Aorta (tissue), 5 donors: ENCODE measurements at regions of chr2 and their contacts with region 1.

Region 1: GRCh38 chr2:199955339-199956261 is at the starts of genes MAIP1 and TYW5:
- DNase-seq: peak; percentile 86 to 93
- ATAC-seq: peak; percentile 96
- H3K4me3 ChIP-seq: peak within 1 kb of the TSS; percentile 62 to 66
- H3K27ac ChIP-seq: peak within 1 kb of the TSS in 1 of 2 donors; percentile 68
- H3K4me1 ChIP-seq: peaks cover 0 to 5% of the 10 kb centered on the region in 2 donors
- H3K27me3 ChIP-seq: no peaks in the 10 kb centered on the region
- total RNA-seq, gene MAIP1: 9.9 to 12.3 TPM
- total RNA-seq, gene TYW5: 5.2 to 9.0 TPM

Region 2: GRCh38 chr2:199911052-199911876 is 44.3 kb before region 1 on chr2 and contains the start of gene C2orf69:
- intact Hi-C with region 1: loop called in 1 of 2 experiments (anchors 5 kb)
- DNase-seq: peak; percentile 98
- ATAC-seq: peak; percentile 99
- H3K4me3 ChIP-seq: peak within 1 kb of the TSS; percentile 70 to 87
- H3K27ac ChIP-seq: peak within 1 kb of the TSS; percentile 62 to 87
- H3K4me1 ChIP-seq: peaks cover 0 to 3% of the 10 kb centered on the region in 2 donors
- H3K27me3 ChIP-seq: no peaks in the 10 kb centered on the region
- total RNA-seq, gene C2orf69: 11.0 to 11.2 TPM

Region 3: GRCh38 chr2:200829258-200829655 is 873.7 kb after region 1 on chr2:
- intact Hi-C with region 1: loop called in 1 of 2 experiments (anchors 10 kb)
- DNase-seq: no peak
- ATAC-seq: no peak
- H3K4me3 ChIP-seq: no peak overlapping the region
- H3K27ac ChIP-seq: no peak overlapping the region
- H3K4me1 ChIP-seq: no peaks in the 10 kb centered on the region
- H3K27me3 ChIP-seq: no peaks in the 10 kb centered on the region